ENCODE measurements at regions of chr5 and their contacts with region 1.

Region 1: GRCh38 chr5:32444431-32445286 is at the start of gene ZFR:
- DNase-seq: peak; percentile 90
- ATAC-seq: peak; percentile 85
- H3K4me3 Mint-ChIP-seq: peak within 1 kb of the TSS; percentile 92
- H3K27ac Mint-ChIP-seq: peak within 1 kb of the TSS; percentile 92
- H3K4me1 Mint-ChIP-seq: peaks cover 60% of the 10 kb centered on the region
- H3K27me3 Mint-ChIP-seq: no peaks in the 10 kb centered on the region
- CTCF ChIP-seq: no peak
- total RNA-seq, gene ZFR: 60.2 and 64.3 TPM in 2 replicates

Region 2: DNA sequence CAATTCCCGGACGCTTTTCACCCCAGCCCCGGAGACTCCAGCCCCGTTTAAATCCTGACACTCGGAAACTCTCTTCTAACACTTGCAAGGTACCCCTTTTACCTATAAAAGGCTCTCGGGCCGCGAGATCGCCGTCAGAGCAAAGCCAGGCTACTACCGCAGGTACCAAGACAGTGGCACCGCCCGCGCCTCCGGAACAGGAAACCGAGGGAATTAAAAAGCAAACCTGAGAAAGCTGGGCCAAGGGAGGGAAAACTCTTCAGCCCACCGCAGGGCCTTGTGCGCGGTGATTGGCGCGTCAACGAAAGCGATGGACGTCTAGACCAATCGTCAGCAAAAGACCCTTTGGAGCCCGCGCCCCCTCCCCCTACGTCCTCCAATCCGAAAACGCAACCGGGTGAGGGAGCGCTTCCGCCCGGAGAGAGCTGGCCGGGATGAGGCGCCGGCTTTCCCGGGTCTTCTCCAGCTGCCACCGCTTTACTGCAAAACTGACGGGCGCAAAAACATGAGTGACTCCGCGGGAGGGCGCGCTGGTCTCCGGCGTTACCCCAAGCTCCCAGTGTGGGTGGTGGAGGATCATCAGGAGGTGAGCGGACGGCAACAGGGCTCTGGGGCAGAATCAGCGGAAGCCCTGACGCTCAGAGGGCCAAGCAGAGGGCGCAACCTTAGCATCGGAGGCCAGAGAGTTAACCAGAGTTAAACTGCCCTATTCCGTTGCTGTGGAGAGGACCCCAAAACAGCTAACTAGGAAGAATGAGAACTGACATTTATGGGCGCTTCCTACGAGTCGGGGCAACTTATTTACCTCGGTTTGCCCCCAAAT is 912.6 kb before region 1 on chr5 and contains the starts of genes C5orf22 and DROSHA:
- CTCF ChIA-PET with region 1: no interaction called
- POLR2A ChIA-PET with region 1: no interaction called
- intact Hi-C with region 1: loop called (anchors 1 kb)
- DNase-seq: peak; percentile 81
- ATAC-seq: peak; percentile 98
- H3K4me3 Mint-ChIP-seq: peak within 1 kb of the TSS; percentile 99
- H3K27ac Mint-ChIP-seq: peak within 1 kb of the TSS; percentile 92
- H3K4me1 Mint-ChIP-seq: peaks cover 43% of the 10 kb centered on the region
- H3K27me3 Mint-ChIP-seq: no peaks in the 10 kb centered on the region
- CTCF ChIP-seq: no peak
- total RNA-seq, gene C5orf22: 27.0 and 27.1 TPM in 2 replicates
- total RNA-seq, gene DROSHA: 53.8 and 59.8 TPM in 2 replicates

Region 3: GRCh38 chr5:32388432-32389129 is 56.1 kb before region 1 on chr5:
- CTCF ChIA-PET with region 1: no interaction called
- POLR2A ChIA-PET with region 1: no interaction called
- intact Hi-C with region 1: no loop called
- DNase-seq: no peak
- ATAC-seq: no peak
- H3K4me3 Mint-ChIP-seq: no peak overlapping the region
- H3K27ac Mint-ChIP-seq: no peak overlapping the region
- H3K4me1 Mint-ChIP-seq: no peaks in the 10 kb centered on the region
- H3K27me3 Mint-ChIP-seq: no peaks in the 10 kb centered on the region
- CTCF ChIP-seq: no peak

Region 4: GRCh38 chr5:32531885-32532520 is 87.3 kb after region 1 on chr5:
- CTCF ChIA-PET with region 1: no interaction called
- POLR2A ChIA-PET with region 1: no interaction called
- intact Hi-C with region 1: loop called (anchors 5 kb)
- DNase-seq: no peak
- ATAC-seq: peak; percentile 73
- H3K4me3 Mint-ChIP-seq: peak overlapping the region; percentile 80
- H3K27ac Mint-ChIP-seq: peak overlapping the region; percentile 77
- H3K4me1 Mint-ChIP-seq: peaks cover 43% of the 10 kb centered on the region
- H3K27me3 Mint-ChIP-seq: no peaks in the 10 kb centered on the region
- CTCF ChIP-seq: no peak